Kidney (tissue), 22 donors: ENCODE measurements at regions of chr11 and their contacts with region 1.

Region 1: DNA sequence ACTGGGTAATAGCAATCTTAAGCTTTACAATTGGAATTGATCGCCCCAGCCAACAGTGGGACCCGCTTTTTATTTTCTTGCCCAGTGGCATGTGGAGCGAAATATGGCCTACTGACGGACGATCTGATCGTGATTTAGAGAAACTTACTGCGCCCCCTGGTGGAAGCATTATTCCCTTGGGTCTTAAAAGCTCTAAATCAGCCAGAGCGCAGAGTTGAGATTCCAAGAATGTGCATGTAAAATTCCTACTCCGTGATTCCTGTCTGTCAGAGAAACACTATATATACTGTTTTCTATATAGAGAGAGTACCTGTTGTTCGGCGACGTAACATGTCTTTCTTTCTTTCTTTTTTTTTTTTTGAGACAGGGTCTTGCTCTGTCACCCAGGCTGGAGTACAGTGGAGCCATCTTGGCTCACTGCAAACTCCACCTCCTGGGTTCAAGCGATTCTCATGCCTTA is 3.7 kb upstream of the DPF2 start:
- DNase-seq: peak; percentile 62 to 96 (median 87)
- H3K4me3 ChIP-seq: peak overlapping the region in 1 of 3 donors; percentile 9
- H3K27ac ChIP-seq: no peak overlapping the region
- H3K4me1 ChIP-seq: peaks cover 0 to 5% (median 4%) of the 10 kb centered on the region in 3 donors
- H3K27me3 ChIP-seq: no peaks in the 10 kb centered on the region
- CTCF ChIP-seq: peak; percentile 86

Region 2: DNA sequence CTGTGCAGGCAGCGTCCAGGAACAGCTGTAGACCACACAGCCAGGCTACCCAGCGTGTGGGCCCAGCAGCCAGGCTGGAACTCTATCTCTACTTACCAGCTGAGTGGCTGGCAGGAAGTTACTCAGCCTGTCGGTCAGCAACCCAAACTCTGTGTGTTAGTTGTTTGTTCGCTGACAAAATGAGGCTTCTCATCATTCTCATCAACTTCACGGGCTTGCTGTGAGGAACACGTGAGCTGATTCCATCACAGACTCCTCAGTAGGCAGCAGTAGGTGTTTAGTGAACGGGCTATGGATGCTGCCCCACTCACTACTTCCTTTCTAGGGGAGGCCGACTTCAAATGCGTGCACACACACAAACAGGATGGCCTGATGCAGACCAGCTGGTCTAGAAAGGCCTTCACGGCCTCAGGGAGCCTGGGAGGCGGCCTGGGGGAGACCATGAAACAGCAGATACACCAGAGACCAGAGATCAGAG is 160.8 kb before region 1 on chr11:
- intact Hi-C with region 1: no loop called
- DNase-seq: peak in 2 of 5 donors; percentile 20 to 45
- H3K4me3 ChIP-seq: no peak overlapping the region
- H3K27ac ChIP-seq: no peak overlapping the region
- H3K4me1 ChIP-seq: peaks cover 0 to 2% (median 0%) of the 10 kb centered on the region in 3 donors
- H3K27me3 ChIP-seq: no peaks in the 10 kb centered on the region
- CTCF ChIP-seq: no peak

Region 3: GRCh38 chr11:65274735-65275682 is 55.0 kb before region 1 on chr11:
- intact Hi-C with region 1: loop called (anchors 5 kb)
- DNase-seq: peak; percentile 72 to 91 (median 81)
- H3K4me3 ChIP-seq: peak overlapping the region in 1 of 3 donors; percentile 9
- H3K27ac ChIP-seq: peak overlapping the region; percentile 12 to 65
- H3K4me1 ChIP-seq: peaks cover 4 to 11% (median 5%) of the 10 kb centered on the region in 3 donors
- H3K27me3 ChIP-seq: no peaks in the 10 kb centered on the region
- CTCF ChIP-seq: peak; percentile 95